Heart right ventricle (tissue), 16 donors: ENCODE measurements at regions of chr17 and their contacts with region 1.

Region 1: GRCh38 chr17:6666077-6666521 is 14.5 kb downstream of the C17orf100 start:
- DNase-seq: peak; percentile 54 to 75
- ATAC-seq: peak; percentile 85 to 95 (median 92)
- H3K4me3 ChIP-seq: no peak overlapping the region
- H3K27ac ChIP-seq: no peak overlapping the region
- H3K4me1 ChIP-seq: peaks cover 0 to 10% (median 0%) of the 10 kb centered on the region in 9 donors
- H3K27me3 ChIP-seq: peaks cover 0 to 51% (median 27%) of the 10 kb centered on the region in 7 donors
- CTCF ChIP-seq: peak; percentile 85 to 95 (median 92)

Region 2: GRCh38 chr17:6603744-6604325 is 62.3 kb before region 1 on chr17:
- intact Hi-C with region 1: loop called in 1 of 10 experiments (anchors 10 kb)
- DNase-seq: peak in 1 of 2 donors; percentile 19
- ATAC-seq: no peak
- H3K4me3 ChIP-seq: no peak overlapping the region
- H3K27ac ChIP-seq: no peak overlapping the region
- H3K4me1 ChIP-seq: peaks cover 0 to 16% (median 0%) of the 10 kb centered on the region in 9 donors
- H3K27me3 ChIP-seq: no peaks in the 10 kb centered on the region
- CTCF ChIP-seq: no peak

Region 3: DNA sequence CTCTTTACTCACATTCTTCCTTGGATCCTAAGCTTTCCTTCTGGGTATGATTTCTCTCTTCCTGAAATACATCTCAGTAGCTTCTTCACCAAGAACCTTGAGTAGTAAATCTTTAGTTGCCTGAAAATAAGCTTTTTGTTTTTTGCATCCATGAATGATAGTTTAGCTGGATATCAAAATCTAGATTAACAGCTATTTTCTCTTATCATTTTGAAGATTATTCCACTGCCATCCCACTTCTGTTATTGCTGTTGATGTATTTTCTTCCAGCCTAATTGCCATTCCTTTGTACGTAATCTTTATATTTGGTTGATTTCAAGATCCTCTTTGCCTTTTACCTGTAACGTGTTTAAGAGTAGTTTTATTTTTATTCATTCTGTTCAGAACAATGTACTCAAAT is 102.3 kb after region 1 on chr17:
- intact Hi-C with region 1: no loop called
- DNase-seq: no peak
- ATAC-seq: no peak
- H3K4me3 ChIP-seq: no peak overlapping the region
- H3K27ac ChIP-seq: no peak overlapping the region
- H3K4me1 ChIP-seq: no peaks in the 10 kb centered on the region
- H3K27me3 ChIP-seq: no peaks in the 10 kb centered on the region
- CTCF ChIP-seq: no peak

Region 4: GRCh38 chr17:6800422-6801027 is 134.4 kb after region 1 on chr17:
- intact Hi-C with region 1: loop called in 1 of 10 experiments (anchors 5 kb)
- DNase-seq: no peak
- ATAC-seq: no peak
- H3K4me3 ChIP-seq: no peak overlapping the region
- H3K27ac ChIP-seq: no peak overlapping the region
- H3K4me1 ChIP-seq: no peaks in the 10 kb centered on the region
- H3K27me3 ChIP-seq: peaks cover 0 to 30% (median 18%) of the 10 kb centered on the region in 7 donors
- CTCF ChIP-seq: peak in 1 of 9 donors; percentile 43

Region 5: GRCh38 chr17:6843241-6843880 is 177.3 kb after region 1 on chr17:
- intact Hi-C with region 1: loop called in 7 of 10 experiments (anchors 2 to 10 kb)
- DNase-seq: no peak
- ATAC-seq: peak in 3 of 8 donors; percentile 62 to 67 (median 67)
- H3K4me3 ChIP-seq: no peak overlapping the region
- H3K27ac ChIP-seq: no peak overlapping the region
- H3K4me1 ChIP-seq: peaks cover 0 to 7% (median 0%) of the 10 kb centered on the region in 9 donors
- H3K27me3 ChIP-seq: peaks cover 0 to 50% (median 30%) of the 10 kb centered on the region in 7 donors
- CTCF ChIP-seq: peak; percentile 22 to 73 (median 63)

Region 6: GRCh38 chr17:6894206-6894528 is 228.1 kb after region 1 on chr17:
- intact Hi-C with region 1: loop called in 3 of 10 experiments (anchors 10 kb)
- DNase-seq: no peak
- ATAC-seq: no peak
- H3K4me3 ChIP-seq: peak overlapping the region in 1 of 10 donors; percentile 20
- H3K27ac ChIP-seq: no peak overlapping the region
- H3K4me1 ChIP-seq: peaks cover 0 to 9% (median 6%) of the 10 kb centered on the region in 9 donors
- H3K27me3 ChIP-seq: peaks cover 5 to 78% (median 59%) of the 10 kb centered on the region in 7 donors
- CTCF ChIP-seq: peak in 7 of 9 donors; percentile 30 to 57 (median 37)

Region 7: GRCh38 chr17:6995431-6996255 is 329.5 kb after region 1 on chr17 and contains the start of gene ALOX12:
- intact Hi-C with region 1: loop called in 6 of 10 experiments (anchors 5 to 10 kb)
- DNase-seq: no peak
- ATAC-seq: peak; percentile 38 to 67 (median 63)
- H3K4me3 ChIP-seq: peak within 1 kb of the TSS in 9 of 10 donors; percentile 21 to 45 (median 41)
- H3K27ac ChIP-seq: no peak within 1 kb of the TSS
- H3K4me1 ChIP-seq: peaks cover 0 to 17% (median 8%) of the 10 kb centered on the region in 9 donors
- H3K27me3 ChIP-seq: peaks cover 0 to 4% (median 0%) of the 10 kb centered on the region in 7 donors
- CTCF ChIP-seq: no peak
- total RNA-seq, gene ALOX12: 0.11 TPM in 1 of 10 donors, not detected in the others

Region 8: GRCh38 chr17:7014261-7014994 is 348.3 kb after region 1 on chr17:
- intact Hi-C with region 1: loop called in 8 of 10 experiments (anchors 5 to 10 kb)
- DNase-seq: peak; percentile 97 to 99
- ATAC-seq: peak; percentile 87 to 93 (median 90)
- H3K4me3 ChIP-seq: peak overlapping the region; percentile 59 to 98 (median 92)
- H3K27ac ChIP-seq: peak overlapping the region; percentile 87 to 100 (median 96)
- H3K4me1 ChIP-seq: peaks cover 19 to 84% (median 68%) of the 10 kb centered on the region in 9 donors
- H3K27me3 ChIP-seq: no peaks in the 10 kb centered on the region
- CTCF ChIP-seq: peak; percentile 70 to 97 (median 84)